ENCODE measurements at regions of chr11 and their contacts with region 1.

Region 1: GRCh38 chr11:119334174-119334930 is at the start of gene RNF26:
- DNase-seq: peak; percentile 94 to 98
- H3K4me3 ChIP-seq: peak within 1 kb of the TSS; percentile 77 to 93
- H3K27ac ChIP-seq: peak within 1 kb of the TSS; percentile 85 to 88
- H3K4me1 ChIP-seq: peaks cover 0 to 17% of the 10 kb centered on the region in 2 donors
- H3K27me3 ChIP-seq: no peaks in the 10 kb centered on the region
- CTCF ChIP-seq: peak in 1 of 4 experiments; percentile 7
- POLR2A ChIP-seq: peak; percentile 42 to 59
- total RNA-seq, gene RNF26: 3.3 to 23.1 (median 6.8) TPM

Region 2: DNA sequence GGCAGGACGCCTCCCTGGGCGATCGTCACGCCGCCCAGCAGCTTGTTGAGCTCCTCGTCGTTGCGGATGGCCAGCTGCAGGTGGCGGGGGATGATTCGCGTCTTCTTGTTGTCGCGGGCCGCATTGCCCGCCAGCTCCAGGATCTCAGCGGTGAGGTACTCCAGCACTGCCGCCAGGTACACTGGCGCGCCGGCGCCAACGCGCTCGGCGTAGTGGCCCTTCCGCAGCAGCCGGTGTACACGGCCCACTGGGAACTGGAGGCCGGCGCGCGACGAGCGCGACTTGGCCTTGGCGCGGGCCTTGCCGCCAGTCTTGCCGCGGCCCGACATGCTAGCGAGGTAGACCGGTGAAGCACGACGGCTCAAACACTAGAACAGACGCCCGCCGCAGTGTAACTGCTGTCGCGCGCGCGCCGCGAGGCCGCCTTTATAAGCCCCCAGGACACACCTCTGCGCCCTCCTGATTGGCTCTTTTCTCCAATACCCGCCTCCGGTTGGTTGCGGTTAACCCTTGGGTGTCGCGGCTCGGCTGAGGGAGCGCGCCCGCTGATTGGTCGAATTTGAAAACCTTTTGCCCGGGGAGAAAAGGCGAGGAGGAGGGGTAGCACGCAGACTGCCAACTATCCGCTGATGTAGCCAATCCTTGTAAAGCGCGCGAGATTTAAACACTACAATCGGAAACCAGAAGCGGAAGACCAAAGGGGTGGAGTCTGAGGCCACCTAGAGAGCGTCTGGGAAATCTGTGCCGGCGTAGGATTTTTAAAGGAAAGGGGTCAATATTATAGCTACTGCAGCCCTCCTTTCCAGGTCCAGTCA is 239.1 kb before region 1 on chr11:
- intact Hi-C with region 1: loop called (anchors 10 kb)
- DNase-seq: peak; percentile 99 to 100
- H3K4me3 ChIP-seq: peak overlapping the region; percentile 66 to 77
- H3K27ac ChIP-seq: peak overlapping the region; percentile 97
- H3K4me1 ChIP-seq: peaks cover 0 to 6% of the 10 kb centered on the region in 2 donors
- H3K27me3 ChIP-seq: no peaks in the 10 kb centered on the region
- CTCF ChIP-seq: no peak
- POLR2A ChIP-seq: peak; percentile 95 to 99

Region 3: DNA sequence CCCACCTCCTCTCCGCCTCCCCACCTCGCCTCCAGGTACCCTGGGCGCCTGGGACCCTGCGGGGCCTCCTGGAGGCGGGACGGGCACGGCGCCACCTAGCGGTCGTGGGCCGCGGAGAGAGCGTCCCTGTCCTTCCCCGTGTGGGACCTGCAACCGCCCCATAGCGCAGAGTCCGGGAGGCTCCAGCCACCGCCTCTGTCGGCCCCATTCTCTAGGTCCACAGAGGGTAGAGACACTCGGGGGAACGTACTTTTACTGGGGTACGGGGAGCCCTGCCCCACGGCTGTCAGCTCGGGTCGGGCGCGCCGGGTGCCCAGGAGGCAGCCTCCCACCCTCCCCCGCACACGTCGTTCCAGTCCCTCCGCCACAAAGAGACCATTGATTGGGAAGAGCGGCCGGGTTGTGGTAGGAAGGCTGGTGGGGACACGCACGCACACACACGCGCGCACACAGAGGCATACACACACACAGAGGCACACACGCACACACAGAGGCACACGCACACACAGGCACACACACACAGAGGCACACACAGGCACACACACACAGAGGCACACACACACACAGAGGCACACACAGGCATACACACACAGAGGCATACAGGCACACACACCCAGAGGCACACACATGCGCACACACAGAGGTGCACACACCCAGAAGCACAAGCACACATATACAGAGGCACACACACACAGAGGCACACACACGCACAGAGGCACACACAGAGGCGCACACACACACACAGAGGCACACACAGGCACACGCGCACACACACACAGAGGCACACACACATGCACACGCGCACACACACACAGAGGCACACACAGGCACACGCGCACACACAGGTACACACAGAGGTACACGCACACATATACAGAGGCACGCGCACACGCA is 407.3 kb after region 1 on chr11:
- intact Hi-C with region 1: no loop called
- DNase-seq: no peak
- H3K4me3 ChIP-seq: no peak overlapping the region
- H3K27ac ChIP-seq: no peak overlapping the region
- H3K4me1 ChIP-seq: no peaks in the 10 kb centered on the region
- H3K27me3 ChIP-seq: peaks cover 0 to 4% of the 10 kb centered on the region in 2 donors
- CTCF ChIP-seq: peak; percentile 44 to 54 (median 50)
- POLR2A ChIP-seq: no peak

Measured in uterus (tissue), 4 donors.